Calu3 (cell line): ENCODE measurements at regions of chr2 and their contacts with region 1.

Region 1: DNA sequence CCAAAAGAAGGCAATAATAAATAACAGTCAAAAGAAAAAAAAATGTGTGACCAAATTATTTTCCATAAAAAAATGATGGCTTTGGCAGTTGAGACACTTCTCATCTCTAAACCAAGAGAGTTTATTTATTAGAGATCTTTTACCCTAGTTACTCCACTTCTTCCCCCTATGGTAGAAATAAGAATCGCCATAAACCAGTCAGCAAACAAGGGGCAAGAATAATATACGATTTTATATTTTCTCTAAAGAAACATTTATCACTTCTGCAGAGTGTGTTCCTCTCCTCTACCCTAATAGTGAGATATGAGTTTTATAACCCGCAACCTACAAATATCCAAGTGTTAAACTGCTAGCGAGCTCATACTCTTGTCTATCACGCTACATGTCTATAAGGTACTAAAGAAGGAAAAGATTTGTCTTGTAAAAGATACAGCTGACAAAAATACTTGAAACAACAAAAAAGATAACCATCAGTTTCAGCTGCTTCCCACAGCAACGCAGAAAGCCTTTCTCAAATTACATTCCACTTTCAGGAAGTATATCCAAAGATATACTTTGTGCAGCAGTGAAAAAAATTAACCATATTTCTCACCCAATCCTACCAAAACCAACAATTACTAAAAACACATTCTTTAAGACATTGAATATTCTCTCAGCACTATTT is 2.3 kb downstream of the RNF103 start:
- DNase-seq: no peak
- H3K4me3 Mint-ChIP-seq: peak overlapping the region; percentile 92
- H3K27ac Mint-ChIP-seq: peak overlapping the region; percentile 95
- H3K4me1 Mint-ChIP-seq: peaks cover 8% of the 10 kb centered on the region
- H3K27me3 Mint-ChIP-seq: no peaks in the 10 kb centered on the region
- CTCF ChIP-seq: no peak

Region 2: GRCh38 chr2:86518481-86518880 is 102.9 kb before region 1 on chr2:
- CTCF ChIA-PET with region 1: no interaction called
- intact Hi-C with region 1: loop called (anchors 10 kb)
- DNase-seq: peak; percentile 10
- H3K4me3 Mint-ChIP-seq: no peak overlapping the region
- H3K27ac Mint-ChIP-seq: no peak overlapping the region
- H3K4me1 Mint-ChIP-seq: no peaks in the 10 kb centered on the region
- H3K27me3 Mint-ChIP-seq: no peaks in the 10 kb centered on the region
- CTCF ChIP-seq: peak; percentile 28

Region 3: GRCh38 chr2:86808315-86809161 is 187.1 kb after region 1 on chr2:
- CTCF ChIA-PET with region 1: no interaction called
- intact Hi-C with region 1: no loop called
- DNase-seq: peak; percentile 95
- H3K4me3 Mint-ChIP-seq: peak overlapping the region; percentile 82
- H3K27ac Mint-ChIP-seq: peak overlapping the region; percentile 57
- H3K4me1 Mint-ChIP-seq: peaks cover 9% of the 10 kb centered on the region
- H3K27me3 Mint-ChIP-seq: no peaks in the 10 kb centered on the region
- CTCF ChIP-seq: peak; percentile 94